ENCODE measurements at regions of chr10 and their contacts with region 1.

Region 1: DNA sequence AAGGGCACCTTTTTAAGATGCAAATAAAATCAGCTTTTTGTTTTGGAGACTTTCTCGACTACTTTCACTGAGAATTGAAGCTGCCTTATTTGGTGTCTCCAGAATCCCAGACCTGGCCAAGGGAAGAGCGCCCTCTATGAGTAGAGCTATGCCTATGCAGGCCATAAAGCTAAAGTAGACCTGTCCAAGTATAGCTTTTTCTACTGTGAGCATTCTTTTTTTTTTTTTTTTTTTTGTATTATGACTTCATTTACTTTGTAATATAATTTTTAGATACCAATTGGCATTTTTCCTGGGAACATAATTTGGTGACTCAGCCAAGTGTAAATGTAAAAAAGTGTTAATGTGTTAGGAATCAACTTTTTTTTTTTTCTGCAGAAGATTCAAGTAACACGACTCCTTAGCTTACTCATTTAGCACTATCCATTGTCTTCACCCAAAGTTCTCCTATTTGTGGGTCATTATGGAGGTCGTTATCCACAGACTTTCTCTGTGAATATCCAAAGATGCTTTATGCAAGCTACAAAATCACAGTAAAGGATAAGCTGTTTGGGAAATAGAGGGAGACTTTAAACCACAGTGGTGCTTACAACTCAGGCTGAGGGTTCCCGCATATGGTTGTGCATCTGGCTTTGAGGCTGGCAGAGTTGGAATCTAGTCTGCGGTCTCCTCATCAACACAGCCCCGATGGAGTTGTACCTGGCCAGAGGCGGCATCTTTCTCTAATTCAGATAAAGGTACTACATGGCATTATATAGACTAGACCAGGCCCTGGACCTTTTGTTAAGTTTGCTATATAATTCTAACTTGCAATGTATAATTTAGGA is 1040.2 kb upstream of the SORCS1 start:
- DNase-seq: peak; percentile 11
- ATAC-seq: peak; percentile 95
- H3K4me3 ChIP-seq: no peak overlapping the region
- H3K27ac ChIP-seq: no peak overlapping the region
- H3K4me1 ChIP-seq: no peaks in the 10 kb centered on the region
- H3K27me3 ChIP-seq: no peaks in the 10 kb centered on the region
- CTCF ChIP-seq: peak; percentile 72 to 85 (median 80)
- EP300 ChIP-seq: no peak
- POLR2A ChIP-seq: no peak
- RAD21 ChIP-seq: peak; percentile 90

Region 2: GRCh38 chr10:106705681-106706100 is 1499.0 kb before region 1 on chr10:
- CTCF ChIA-PET with region 1: interaction called, 8 read pairs
- POLR2A ChIA-PET with region 1: no interaction called
- RAD21 ChIA-PET with region 1: interaction called, 11 read pairs
- SMC1A ChIA-PET with region 1: no interaction called
- in situ Hi-C with region 1: no loop called
- intact Hi-C with region 1: no loop called
- DNase-seq: no peak
- ATAC-seq: peak; percentile 94
- H3K4me3 ChIP-seq: no peak overlapping the region
- H3K27ac ChIP-seq: no peak overlapping the region
- H3K4me1 ChIP-seq: no peaks in the 10 kb centered on the region
- H3K27me3 ChIP-seq: no peaks in the 10 kb centered on the region; a peak in 1 of 4 replicates
- CTCF ChIP-seq: peak; percentile 76 to 83 (median 78)
- EP300 ChIP-seq: no peak
- POLR2A ChIP-seq: no peak
- RAD21 ChIP-seq: peak; percentile 86

Region 3: GRCh38 chr10:107847620-107848019 is 357.1 kb before region 1 on chr10:
- CTCF ChIA-PET with region 1: interaction called, 8 read pairs
- POLR2A ChIA-PET with region 1: no interaction called
- RAD21 ChIA-PET with region 1: interaction called, 7 read pairs
- SMC1A ChIA-PET with region 1: interaction called, 10 read pairs
- in situ Hi-C with region 1: no loop called
- intact Hi-C with region 1: no loop called
- DNase-seq: no peak
- ATAC-seq: peak; percentile 91
- H3K4me3 ChIP-seq: no peak overlapping the region
- H3K27ac ChIP-seq: no peak overlapping the region
- H3K4me1 ChIP-seq: no peaks in the 10 kb centered on the region
- H3K27me3 ChIP-seq: no peaks in the 10 kb centered on the region
- CTCF ChIP-seq: no peak
- EP300 ChIP-seq: no peak
- POLR2A ChIP-seq: no peak
- RAD21 ChIP-seq: no peak

Region 4: GRCh38 chr10:107914450-107915214 is 290.1 kb before region 1 on chr10:
- CTCF ChIA-PET with region 1: interaction called, 29 read pairs
- POLR2A ChIA-PET with region 1: no interaction called
- RAD21 ChIA-PET with region 1: interaction called, 50 read pairs
- SMC1A ChIA-PET with region 1: interaction called, 33 read pairs
- in situ Hi-C with region 1: no loop called
- intact Hi-C with region 1: no loop called
- DNase-seq: no peak
- ATAC-seq: peak; percentile 73
- H3K4me3 ChIP-seq: no peak overlapping the region
- H3K27ac ChIP-seq: no peak overlapping the region
- H3K4me1 ChIP-seq: no peaks in the 10 kb centered on the region
- H3K27me3 ChIP-seq: no peaks in the 10 kb centered on the region
- CTCF ChIP-seq: no peak; a peak in 1 of 6 replicates
- EP300 ChIP-seq: no peak
- POLR2A ChIP-seq: no peak
- RAD21 ChIP-seq: no peak

Region 5: GRCh38 chr10:108005627-108006026 is 199.1 kb before region 1 on chr10:
- CTCF ChIA-PET with region 1: interaction called, 6 read pairs
- POLR2A ChIA-PET with region 1: no interaction called
- RAD21 ChIA-PET with region 1: interaction called, 7 read pairs
- SMC1A ChIA-PET with region 1: interaction called, 12 read pairs
- in situ Hi-C with region 1: no loop called
- intact Hi-C with region 1: no loop called
- DNase-seq: no peak
- ATAC-seq: 0 out of 3 replicates have a peak, but pooled peaks have one; percentile 21
- H3K4me3 ChIP-seq: no peak overlapping the region
- H3K27ac ChIP-seq: no peak overlapping the region
- H3K4me1 ChIP-seq: no peaks in the 10 kb centered on the region; the same call in 1 of the 2 replicates
- H3K27me3 ChIP-seq: no peaks in the 10 kb centered on the region
- CTCF ChIP-seq: no peak
- EP300 ChIP-seq: no peak
- POLR2A ChIP-seq: no peak
- RAD21 ChIP-seq: no peak

Region 6: GRCh38 chr10:108112219-108112618 is 92.5 kb before region 1 on chr10:
- CTCF ChIA-PET with region 1: interaction called, 10 read pairs
- POLR2A ChIA-PET with region 1: no interaction called
- RAD21 ChIA-PET with region 1: interaction called, 6 read pairs
- SMC1A ChIA-PET with region 1: interaction called, 3 read pairs
- in situ Hi-C with region 1: no loop called
- intact Hi-C with region 1: no loop called
- DNase-seq: no peak
- ATAC-seq: no peak
- H3K4me3 ChIP-seq: no peak overlapping the region
- H3K27ac ChIP-seq: no peak overlapping the region
- H3K4me1 ChIP-seq: no peaks in the 10 kb centered on the region
- H3K27me3 ChIP-seq: no peaks in the 10 kb centered on the region
- CTCF ChIP-seq: peak in 2 of 3 experiments; percentile 2 to 17; a peak in 2 of 6 replicates
- EP300 ChIP-seq: no peak
- POLR2A ChIP-seq: no peak
- RAD21 ChIP-seq: peak; percentile 16; the same call in 1 of the 2 replicates

Region 7: DNA sequence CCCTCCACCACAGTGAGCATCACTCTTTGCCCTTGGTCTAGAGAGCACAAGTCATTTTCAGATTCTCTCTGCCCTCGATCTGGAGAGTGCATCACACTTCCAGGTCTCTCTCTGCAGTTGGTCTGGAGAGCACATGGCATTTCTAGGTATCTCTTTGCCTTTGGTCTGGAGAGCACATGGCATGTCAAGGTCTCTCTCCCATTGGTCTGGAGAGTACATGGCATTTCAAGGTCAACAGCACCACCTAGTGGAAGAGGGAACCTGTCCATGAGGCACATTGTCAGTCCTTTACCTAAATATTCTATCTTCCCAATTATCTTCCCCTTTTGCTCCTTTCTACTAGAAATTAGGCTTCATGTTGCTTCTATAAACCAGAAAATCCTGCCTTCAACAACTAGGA is 579.2 kb after region 1 on chr10:
- CTCF ChIA-PET with region 1: interaction called, 3 read pairs
- POLR2A ChIA-PET with region 1: no interaction called
- RAD21 ChIA-PET with region 1: no interaction called
- SMC1A ChIA-PET with region 1: interaction called, 3 read pairs
- in situ Hi-C with region 1: no loop called
- intact Hi-C with region 1: loop called (anchors 10 kb)
- DNase-seq: peak; percentile 31
- ATAC-seq: peak; percentile 86
- H3K4me3 ChIP-seq: no peak overlapping the region
- H3K27ac ChIP-seq: no peak overlapping the region
- H3K4me1 ChIP-seq: no peaks in the 10 kb centered on the region
- H3K27me3 ChIP-seq: no peaks in the 10 kb centered on the region
- CTCF ChIP-seq: peak; percentile 59 to 67 (median 66)
- EP300 ChIP-seq: no peak
- POLR2A ChIP-seq: no peak
- RAD21 ChIP-seq: peak; percentile 83